Cardiac septum (tissue), 1 donor: ENCODE measurements at regions of chr11 and their contacts with region 1.

Region 1: GRCh38 chr11:114036156-114036811 is 23.2 kb upstream of the ZBTB16 start:
- DNase-seq: peak; percentile 91

Region 2: GRCh38 chr11:113934761-113935160 is 101.5 kb before region 1 on chr11:
- intact Hi-C with region 1: no loop called
- DNase-seq: no peak

Region 3: DNA sequence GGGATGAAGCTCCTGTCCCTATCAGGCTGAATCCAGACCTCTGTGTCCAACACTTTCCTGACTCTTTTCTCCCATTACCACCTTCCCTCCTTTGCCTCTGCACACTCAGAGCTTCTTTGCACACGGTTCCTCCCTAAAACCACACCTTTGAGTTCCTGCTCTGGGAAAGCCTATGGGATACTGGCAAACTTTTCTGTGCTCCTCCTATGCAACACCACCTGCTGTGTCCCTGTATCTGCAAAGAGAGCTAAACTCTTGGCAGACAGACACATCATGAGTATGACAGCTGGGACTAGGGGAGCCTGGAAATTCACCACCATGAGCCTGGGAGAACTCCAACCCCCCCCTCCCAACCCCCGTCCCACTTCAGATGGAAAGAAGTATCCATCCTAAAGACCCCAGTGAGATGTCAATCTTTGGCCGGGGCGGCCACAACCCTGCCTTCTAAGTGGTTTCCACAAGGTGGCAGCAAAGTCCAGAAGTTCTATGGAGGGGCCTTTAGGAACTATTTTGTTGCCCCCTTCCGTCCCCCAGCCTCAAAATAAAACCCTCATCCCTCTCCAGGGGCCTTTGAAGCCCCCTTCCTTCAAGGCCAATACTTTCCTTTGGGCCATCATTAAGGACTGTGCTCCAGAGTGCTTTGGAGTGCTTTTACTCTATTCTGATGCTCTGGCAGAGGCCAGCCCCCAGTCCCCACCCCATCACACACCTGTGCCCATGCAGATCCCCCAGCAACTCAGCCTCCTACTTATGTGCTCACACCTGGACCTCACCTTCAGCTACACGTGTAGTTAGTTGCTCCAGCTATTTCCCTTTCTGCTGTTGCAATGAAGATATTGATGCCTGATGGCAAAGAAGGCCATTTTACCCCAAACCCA is 42.0 kb before region 1 on chr11:
- intact Hi-C with region 1: loop called (anchors 5 kb)
- DNase-seq: no peak

Region 4: GRCh38 chr11:114059278-114059983 is 23.1 kb after region 1 on chr11 and contains the start of gene ZBTB16:
- intact Hi-C with region 1: loop called (anchors 2 kb)
- DNase-seq: peak; percentile 93
- total RNA-seq, gene ZBTB16: 25.4 TPM

Region 5: DNA sequence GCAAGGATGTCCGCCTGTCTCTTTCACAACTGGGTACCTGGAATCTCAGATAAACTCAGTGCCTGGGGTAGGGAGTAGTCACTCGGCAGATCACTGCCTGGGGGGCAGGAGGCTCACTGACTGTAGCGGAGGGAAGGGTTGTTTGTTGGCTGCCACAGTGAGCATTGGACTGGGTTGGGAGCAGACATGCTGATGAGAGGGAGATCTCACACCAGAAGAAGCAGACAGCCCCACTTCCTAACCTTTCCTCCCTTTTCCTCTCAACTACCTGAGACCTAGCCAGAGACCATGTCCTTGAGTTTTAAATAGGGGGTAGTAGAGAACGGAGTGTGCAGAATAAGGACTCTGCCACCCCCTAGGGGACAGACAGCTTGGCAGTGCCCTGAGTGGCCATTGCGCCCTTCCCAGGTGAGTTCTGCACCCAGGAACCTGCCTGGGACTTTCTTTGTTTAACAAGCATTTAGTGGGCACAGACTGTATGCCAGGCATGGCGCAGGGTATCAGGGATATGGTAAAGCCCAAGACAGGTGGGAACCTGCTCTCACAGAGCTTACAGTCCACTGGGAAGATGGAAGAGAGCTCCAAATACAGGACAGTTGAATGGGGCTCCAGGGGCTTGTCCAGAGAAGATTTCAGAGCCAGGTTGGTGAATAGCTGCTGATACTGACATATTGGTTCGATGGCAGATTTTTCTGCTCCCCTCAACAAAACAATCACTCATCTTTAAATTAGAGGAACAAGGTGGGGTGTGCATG is 144.2 kb after region 1 on chr11:
- intact Hi-C with region 1: loop called (anchors 1 kb)
- DNase-seq: no peak

Region 6: DNA sequence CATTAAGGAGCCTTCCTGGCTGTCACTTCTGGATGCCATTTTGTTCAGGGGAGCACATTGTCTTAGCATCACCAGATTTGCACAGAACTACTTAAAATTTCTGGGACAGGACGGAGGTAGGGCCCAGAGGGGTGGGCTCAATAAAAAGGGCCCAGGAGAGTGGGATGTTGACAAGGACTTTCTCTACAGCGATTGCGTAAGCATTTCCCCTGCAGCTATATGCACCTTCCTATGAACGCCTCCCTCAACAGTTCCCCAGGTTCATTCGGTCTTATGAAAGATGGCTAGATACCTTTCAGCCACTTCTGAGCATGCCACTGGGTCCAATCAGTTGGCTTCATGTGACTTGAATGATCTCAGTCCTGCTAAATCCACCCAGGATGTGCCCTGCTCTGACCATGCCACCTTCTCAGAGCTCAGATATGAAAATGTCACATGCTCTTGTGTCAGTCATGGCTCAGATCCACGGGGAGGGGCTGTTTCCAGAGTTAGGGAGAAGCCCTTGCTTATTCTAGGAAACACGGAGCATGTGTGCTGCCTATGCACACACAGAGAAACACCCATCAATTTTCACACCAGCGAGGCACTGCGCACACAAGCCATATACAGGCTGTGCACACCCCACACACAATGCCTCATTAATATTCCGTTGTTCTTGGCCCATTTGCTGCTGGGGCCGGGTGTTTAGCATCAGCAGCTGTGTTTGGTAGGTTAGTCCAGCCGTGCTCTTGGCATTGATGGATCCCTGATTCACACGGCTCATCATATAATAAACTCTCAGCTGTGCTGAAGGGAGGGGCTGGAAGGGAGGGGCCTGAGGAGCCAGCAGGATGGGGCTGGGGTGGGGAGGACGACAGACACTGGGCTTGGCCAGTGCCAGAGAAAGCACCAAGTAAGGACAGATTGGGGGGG is 207.4 kb after region 1 on chr11:
- intact Hi-C with region 1: loop called (anchors 5 kb)
- DNase-seq: peak; percentile 85